ENCODE measurements at regions of chr2 and their contacts with region 1.

Region 1: GRCh38 chr2:30336978-30337841 is 105.9 kb downstream of the LBH start:
- DNase-seq: peak; percentile 89
- H3K4me3 Mint-ChIP-seq: peak overlapping the region; percentile 68
- H3K27ac Mint-ChIP-seq: peak overlapping the region; percentile 94
- H3K4me1 Mint-ChIP-seq: peaks cover 77% of the 10 kb centered on the region
- H3K27me3 Mint-ChIP-seq: no peaks in the 10 kb centered on the region

Region 2: DNA sequence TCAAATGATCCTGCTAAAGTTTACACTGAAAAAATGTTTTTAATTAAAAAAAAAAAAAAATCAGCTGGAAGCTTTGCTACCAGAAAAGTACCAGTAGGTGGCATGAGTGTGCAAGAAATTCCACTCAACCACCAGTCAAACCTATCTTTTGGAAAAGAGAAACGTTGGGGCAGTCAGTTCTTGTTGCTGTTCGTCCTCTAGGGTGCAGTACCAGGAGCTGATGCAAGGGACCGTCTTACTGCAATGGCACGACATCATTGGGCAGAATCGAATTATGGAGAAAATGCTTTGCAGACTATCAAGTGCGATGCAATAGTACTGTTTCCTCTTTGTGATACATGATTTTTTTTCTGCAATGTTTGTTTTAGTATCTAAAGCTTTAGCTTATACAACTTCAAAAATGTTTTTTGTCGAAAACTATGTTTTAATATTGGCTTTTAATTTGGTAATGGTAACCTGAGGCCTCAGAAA is 172.1 kb before region 1 on chr2:
- intact Hi-C with region 1: loop called (anchors 2 kb)
- DNase-seq: peak; percentile 91
- H3K4me3 Mint-ChIP-seq: no peak overlapping the region
- H3K27ac Mint-ChIP-seq: no peak overlapping the region
- H3K4me1 Mint-ChIP-seq: peaks cover 2% of the 10 kb centered on the region
- H3K27me3 Mint-ChIP-seq: peaks cover 2% of the 10 kb centered on the region

Region 3: GRCh38 chr2:30266051-30266621 is 71.1 kb before region 1 on chr2:
- intact Hi-C with region 1: loop called (anchors 1 kb)
- DNase-seq: peak; percentile 86
- H3K4me3 Mint-ChIP-seq: peak overlapping the region; percentile 90
- H3K27ac Mint-ChIP-seq: peak overlapping the region; percentile 99
- H3K4me1 Mint-ChIP-seq: peaks cover 70% of the 10 kb centered on the region
- H3K27me3 Mint-ChIP-seq: no peaks in the 10 kb centered on the region

Region 4: GRCh38 chr2:30315391-30316063 is 21.7 kb before region 1 on chr2:
- intact Hi-C with region 1: loop called (anchors 1 kb)
- DNase-seq: peak; percentile 74
- H3K4me3 Mint-ChIP-seq: peak overlapping the region; percentile 24
- H3K27ac Mint-ChIP-seq: peak overlapping the region; percentile 92
- H3K4me1 Mint-ChIP-seq: peaks cover 33% of the 10 kb centered on the region
- H3K27me3 Mint-ChIP-seq: no peaks in the 10 kb centered on the region

Region 5: GRCh38 chr2:30410217-30410616 is 73.0 kb after region 1 on chr2:
- intact Hi-C with region 1: loop called (anchors 2 kb)
- DNase-seq: peak; percentile 69
- H3K4me3 Mint-ChIP-seq: peak overlapping the region; percentile 0
- H3K27ac Mint-ChIP-seq: peak overlapping the region; percentile 78
- H3K4me1 Mint-ChIP-seq: peaks cover 43% of the 10 kb centered on the region
- H3K27me3 Mint-ChIP-seq: no peaks in the 10 kb centered on the region

Region 6: GRCh38 chr2:30565851-30566358 is 228.7 kb after region 1 on chr2:
- intact Hi-C with region 1: loop called (anchors 5 kb)
- DNase-seq: no peak
- H3K4me3 Mint-ChIP-seq: no peak overlapping the region
- H3K27ac Mint-ChIP-seq: peak overlapping the region; percentile 68
- H3K4me1 Mint-ChIP-seq: peaks cover 12% of the 10 kb centered on the region
- H3K27me3 Mint-ChIP-seq: no peaks in the 10 kb centered on the region